ENCODE measurements at regions of chr1 and their contacts with region 1.

Region 1: GRCh38 chr1:92461364-92462097 is 25.2 kb downstream of the GFI1 start:
- DNase-seq: no peak
- H3K4me3 Mint-ChIP-seq: no peak overlapping the region
- H3K27ac Mint-ChIP-seq: no peak overlapping the region
- H3K4me1 Mint-ChIP-seq: peaks cover 50% of the 10 kb centered on the region
- H3K27me3 Mint-ChIP-seq: no peaks in the 10 kb centered on the region

Region 2: DNA sequence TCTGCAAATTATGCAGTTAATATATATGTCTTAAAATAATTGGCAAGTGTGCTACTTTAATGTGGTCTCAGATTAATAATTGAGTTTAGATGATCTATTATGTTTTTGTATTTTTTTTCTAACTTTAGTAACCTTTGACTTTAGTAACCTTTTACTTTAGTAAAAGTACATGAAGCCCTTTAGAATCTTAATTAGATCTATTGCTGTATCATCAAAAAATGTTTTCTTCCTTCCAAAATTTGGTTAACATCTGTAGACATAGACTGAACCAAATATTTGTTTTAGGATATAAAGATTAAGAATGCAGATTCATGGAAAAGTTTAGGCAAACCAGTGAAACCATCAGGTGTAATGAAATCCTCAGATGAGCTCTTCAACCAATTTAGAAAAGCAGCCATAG is 457.4 kb before region 1 on chr1:
- CTCF ChIA-PET with region 1: no interaction called
- intact Hi-C with region 1: loop called (anchors 10 kb)
- DNase-seq: no peak
- H3K4me3 Mint-ChIP-seq: no peak overlapping the region
- H3K27ac Mint-ChIP-seq: no peak overlapping the region
- H3K4me1 Mint-ChIP-seq: no peaks in the 10 kb centered on the region
- H3K27me3 Mint-ChIP-seq: no peaks in the 10 kb centered on the region

Measured in activated naive CD4-positive, alpha-beta T cell treated with anti-CD3 and anti-CD28 coated beads for 36 hours (primary cell).